CD4-positive, alpha-beta T cell (primary cell): ENCODE measurements at regions of chr17 and their contacts with region 1.

Region 1: DNA sequence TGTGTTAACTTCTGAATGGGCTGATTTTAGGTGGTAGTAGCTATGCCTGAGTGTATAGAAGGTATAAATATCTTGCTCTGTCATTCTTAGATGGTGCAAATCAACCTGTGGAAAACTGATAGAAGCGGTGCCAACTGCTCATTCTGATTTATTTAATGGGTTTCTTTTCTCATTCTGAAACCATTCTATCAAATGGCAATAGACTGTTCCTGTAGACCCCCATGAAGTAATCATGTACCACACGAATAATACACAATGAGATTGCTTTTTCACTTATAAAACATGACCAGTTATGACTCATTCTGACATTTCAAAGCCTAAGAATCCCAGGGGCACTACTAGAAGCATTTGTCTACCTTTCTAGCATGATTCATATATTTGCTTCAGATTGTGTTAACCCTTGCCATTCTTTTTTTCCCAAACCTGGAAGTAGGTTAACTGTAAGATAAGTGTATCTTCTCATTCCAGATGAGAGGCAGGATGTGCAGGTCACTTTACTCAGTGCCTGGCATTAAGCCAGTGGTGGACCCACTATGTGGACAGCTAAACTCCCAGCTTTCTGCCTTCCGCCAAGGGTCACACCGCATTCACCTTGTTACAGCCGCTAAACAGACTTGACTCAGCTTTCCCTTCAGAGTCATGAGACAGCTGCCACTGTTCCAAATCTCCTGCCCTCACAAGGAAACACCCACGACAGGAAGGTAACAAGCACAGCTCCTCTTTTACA is 16.4 kb upstream of the SLC16A11 start:
- DNase-seq: peak in 1 of 14 experiments; percentile 17
- ATAC-seq: no peak
- H3K4me3 ChIP-seq: no peak overlapping the region
- H3K4me3 Mint-ChIP-seq: no peak overlapping the region
- H3K27ac ChIP-seq: no peak overlapping the region
- H3K27ac Mint-ChIP-seq: no peak overlapping the region
- H3K4me1 ChIP-seq: no peaks in the 10 kb centered on the region
- H3K4me1 Mint-ChIP-seq: no peaks in the 10 kb centered on the region
- H3K27me3 ChIP-seq: no peaks in the 10 kb centered on the region
- H3K27me3 Mint-ChIP-seq: peaks cover 19% of the 10 kb centered on the region
- CTCF ChIP-seq: no peak

Region 2: DNA sequence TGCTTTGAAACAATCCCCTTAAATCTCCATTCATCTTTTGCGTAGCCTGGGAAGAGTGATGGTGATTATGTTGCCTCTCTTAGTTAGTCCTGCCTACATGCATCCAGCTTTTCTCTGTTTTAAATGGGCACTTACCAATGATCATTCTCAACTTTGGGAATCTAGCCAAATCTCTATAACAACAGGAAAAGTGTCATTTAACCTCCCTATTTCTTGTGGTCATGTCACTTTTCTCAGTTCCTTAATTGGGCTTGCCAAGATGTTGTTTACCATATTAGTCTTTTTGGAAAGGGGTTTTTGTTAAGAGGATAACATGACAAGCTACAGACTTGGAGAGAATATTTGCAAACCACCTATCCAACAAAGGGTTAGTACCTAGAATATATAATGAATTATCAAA is 35.3 kb after region 1 on chr17:
- CTCF ChIA-PET with region 1: no interaction called
- POLR2A ChIA-PET with region 1: no interaction called
- intact Hi-C with region 1: loop called in 1 of 2 experiments (anchors 5 kb)
- DNase-seq: peak in 1 of 14 experiments; percentile 43
- ATAC-seq: no peak
- H3K4me3 ChIP-seq: no peak overlapping the region
- H3K4me3 Mint-ChIP-seq: no peak overlapping the region
- H3K27ac ChIP-seq: no peak overlapping the region
- H3K27ac Mint-ChIP-seq: no peak overlapping the region
- H3K4me1 ChIP-seq: no peaks in the 10 kb centered on the region
- H3K4me1 Mint-ChIP-seq: peaks cover 11% of the 10 kb centered on the region
- H3K27me3 ChIP-seq: no peaks in the 10 kb centered on the region
- H3K27me3 Mint-ChIP-seq: peaks cover 20% of the 10 kb centered on the region
- CTCF ChIP-seq: no peak